ENCODE measurements at regions of chr17 and their contacts with region 1.

Region 1: DNA sequence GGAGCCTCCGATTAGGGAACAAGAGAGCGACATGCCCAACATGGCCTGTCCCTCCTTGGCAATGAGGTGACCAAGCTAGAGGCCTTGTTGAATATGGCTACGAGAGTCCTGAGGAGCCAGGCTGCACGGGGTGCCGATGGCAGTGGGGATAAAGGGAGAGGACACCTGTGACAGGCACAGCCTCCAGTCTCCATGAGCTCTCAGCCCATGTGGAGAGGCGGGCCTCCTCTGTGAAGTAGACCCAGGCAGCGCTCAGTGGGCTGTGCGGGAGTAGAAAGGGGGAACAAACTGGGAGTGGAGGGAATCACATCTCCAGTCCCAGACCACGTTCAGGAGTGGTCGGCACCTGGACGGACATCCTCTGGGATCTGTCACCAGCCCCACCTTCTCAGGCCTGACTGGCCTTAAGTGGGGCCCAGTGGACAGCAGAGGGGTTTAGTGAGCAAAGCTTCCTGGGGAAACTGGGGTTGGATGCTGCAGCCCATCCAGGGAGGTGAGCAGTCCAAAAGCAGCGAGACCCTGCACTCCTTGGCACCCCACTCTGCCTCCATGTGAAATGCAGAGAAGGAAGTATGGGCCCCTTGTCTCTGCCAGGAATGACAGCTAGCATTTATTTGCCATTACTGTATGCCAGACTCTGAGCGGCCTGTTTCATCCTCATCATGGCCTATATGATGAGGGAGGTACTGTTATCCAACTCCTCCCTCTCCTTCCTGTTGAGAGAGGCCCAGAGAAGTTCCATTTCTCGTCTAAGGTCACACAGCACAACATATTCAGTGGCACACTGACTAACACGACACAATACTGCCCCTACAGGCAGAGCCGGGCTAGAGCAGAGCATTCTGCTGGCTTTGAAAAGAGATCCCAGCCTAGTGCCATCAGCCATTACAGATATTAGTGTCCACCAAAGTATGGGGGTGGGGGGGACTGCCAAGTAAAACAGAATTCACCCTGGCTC is 4.5 kb upstream of the TMEM92 start:
- DNase-seq: no peak
- H3K4me3 ChIP-seq: peak overlapping the region; percentile 41
- H3K27me3 ChIP-seq: no peaks in the 10 kb centered on the region
- CTCF ChIP-seq: peak; percentile 91

Region 2: GRCh38 chr17:50177983-50178834 is 91.5 kb before region 1 on chr17:
- CTCF ChIA-PET with region 1: interaction called, 146 read pairs
- POLR2A ChIA-PET with region 1: interaction called, 12 read pairs
- DNase-seq: peak; percentile 93
- H3K4me3 ChIP-seq: no peak overlapping the region
- H3K27me3 ChIP-seq: no peaks in the 10 kb centered on the region
- CTCF ChIP-seq: peak; percentile 69

Region 3: DNA sequence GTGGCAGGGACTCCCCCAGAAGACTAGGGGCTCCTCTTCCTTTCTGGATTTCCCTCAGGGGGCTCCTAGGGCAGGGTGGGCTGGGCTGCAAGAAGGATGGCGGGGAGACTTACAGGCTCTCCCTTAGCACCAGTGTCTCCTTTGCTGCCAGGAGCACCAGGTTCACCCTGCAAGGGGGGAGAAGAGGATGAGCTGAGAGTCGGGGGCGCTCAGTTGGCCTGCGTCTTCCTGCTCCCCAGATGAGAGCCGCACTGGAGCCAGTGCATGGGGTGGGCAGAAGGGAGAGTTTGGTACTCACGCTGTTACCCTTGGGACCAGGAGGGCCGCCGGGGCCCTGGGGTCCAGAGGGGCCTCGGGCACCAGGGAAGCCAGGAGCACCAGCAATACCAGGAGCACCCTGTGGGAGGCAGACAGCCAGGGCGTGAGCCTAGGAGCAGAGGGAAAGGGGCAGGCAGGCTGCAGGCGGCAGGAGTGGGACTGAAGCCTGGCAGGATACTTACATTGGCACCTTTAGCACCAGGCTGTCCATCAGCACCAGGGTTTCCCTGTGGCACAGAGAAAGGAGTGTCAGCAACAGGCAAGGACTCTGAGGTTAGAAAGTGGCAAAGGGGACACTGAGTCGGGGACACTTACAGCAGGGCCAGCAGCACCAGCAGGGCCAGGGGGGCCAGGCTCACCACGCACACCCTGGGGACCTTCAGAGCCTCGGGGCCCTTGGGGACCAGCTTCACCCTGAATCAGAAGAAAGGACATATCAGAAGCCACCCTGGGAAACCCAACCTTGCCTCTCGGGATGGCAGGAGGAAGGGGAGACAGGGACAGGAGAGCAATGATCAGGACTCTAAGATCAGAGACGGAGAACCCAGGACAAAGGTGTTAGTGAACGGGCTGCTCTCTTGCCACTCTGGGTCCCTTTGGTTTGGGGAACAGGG is 74.6 kb before region 1 on chr17:
- CTCF ChIA-PET with region 1: interaction called, 515 read pairs
- POLR2A ChIA-PET with region 1: interaction called, 286 read pairs
- DNase-seq: no peak
- H3K4me3 ChIP-seq: peak overlapping the region; percentile 97
- H3K27me3 ChIP-seq: no peaks in the 10 kb centered on the region
- CTCF ChIP-seq: peak; percentile 59

Region 4: GRCh38 chr17:50213026-50214022 is 56.4 kb before region 1 on chr17:
- CTCF ChIA-PET with region 1: interaction called, 515 read pairs
- POLR2A ChIA-PET with region 1: interaction called, 34 read pairs
- DNase-seq: no peak
- H3K4me3 ChIP-seq: no peak overlapping the region
- H3K27me3 ChIP-seq: no peaks in the 10 kb centered on the region
- CTCF ChIP-seq: no peak